H1 (cell line): ENCODE measurements at regions of chr7 and their contacts with region 1.

Region 1: DNA sequence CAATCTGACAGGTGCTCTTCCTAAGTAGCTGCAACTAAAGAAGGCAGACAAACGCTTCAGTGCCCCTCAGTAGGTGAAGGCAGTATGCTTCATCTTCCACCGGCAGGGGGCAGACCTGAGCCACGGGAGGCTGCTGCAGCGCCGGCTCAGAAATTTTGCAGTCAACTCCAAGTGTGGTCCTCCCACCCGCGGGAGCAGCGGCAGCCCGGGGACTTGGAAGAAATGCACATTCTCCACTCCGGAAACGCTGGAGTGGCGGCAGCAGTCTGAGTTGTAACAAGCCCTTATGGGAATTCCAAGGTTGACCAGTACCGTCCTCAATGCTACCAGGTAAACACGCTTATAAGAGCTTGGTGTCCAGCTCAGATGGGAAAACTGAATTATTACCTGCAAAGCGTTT is 3.4 kb downstream of the IGFBP3 start:
- DNase-seq: peak in 1 of 2 experiments; percentile 96
- H3K4me3 ChIP-seq: peak overlapping the region in 1 of 4 experiments; percentile 37; a peak in 2 of 8 replicates
- H3K27ac ChIP-seq: no peak overlapping the region
- H3K4me1 ChIP-seq: peaks cover 4 to 19% (median 5%) of the 10 kb centered on the region in 4 experiments; a peak in 6 of 7 replicates
- H3K27me3 ChIP-seq: peaks cover 14 to 45% (median 35%) of the 10 kb centered on the region in 4 experiments
- CTCF ChIP-seq: peak; percentile 87 to 93 (median 89)
- EP300 ChIP-seq: no peak
- POLR2A ChIP-seq: no peak
- RAD21 ChIP-seq: peak; percentile 83 to 86

Region 2: DNA sequence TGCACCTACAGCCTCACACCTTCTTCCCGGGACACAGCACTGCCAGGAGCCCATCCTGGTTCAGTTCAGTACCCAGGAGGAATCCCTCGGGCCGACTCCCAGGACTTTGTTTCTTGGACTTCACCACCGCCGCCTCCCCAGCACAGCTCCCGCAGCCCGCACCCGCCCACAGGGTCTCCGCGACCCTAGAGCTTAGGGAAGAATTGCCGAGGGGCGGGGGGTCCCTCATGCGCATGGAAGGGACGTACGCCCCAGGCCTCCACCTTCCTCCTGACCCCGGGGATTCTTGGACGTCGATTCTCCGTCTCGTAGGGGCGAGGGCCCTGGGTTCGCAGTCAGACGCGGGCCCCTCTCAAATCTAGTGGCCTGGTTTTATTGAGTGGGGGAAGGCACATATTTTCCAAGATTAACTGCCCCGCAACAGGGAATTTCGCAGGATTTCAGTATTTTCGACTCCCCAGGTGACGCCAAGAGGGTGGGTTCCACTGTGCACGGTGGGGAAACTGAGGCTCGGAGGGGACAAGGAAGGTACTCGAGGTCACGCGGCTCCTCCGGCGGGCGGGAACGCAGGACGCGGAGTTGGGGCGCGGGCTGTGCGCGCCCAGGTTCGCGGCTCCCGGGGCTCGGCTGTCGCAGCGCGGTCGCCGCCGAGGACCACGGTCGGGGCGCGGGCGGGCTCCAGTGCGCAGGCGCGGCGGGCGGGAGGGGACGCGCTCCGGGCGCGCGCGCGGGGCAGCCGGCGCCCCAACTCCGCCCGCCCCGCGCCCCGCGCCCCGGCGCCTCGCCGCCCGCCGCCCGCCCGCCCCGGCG is 343.8 kb before region 1 on chr7 and contains the start of gene ADCY1:
- CTCF ChIA-PET with region 1: no interaction called
- POLR2A ChIA-PET with region 1: no interaction called
- DNase-seq: peak in 1 of 2 experiments; percentile 75
- H3K4me3 ChIP-seq: peak within 1 kb of the TSS; percentile 68 to 86 (median 74)
- H3K27ac ChIP-seq: no peak within 1 kb of the TSS
- H3K4me1 ChIP-seq: peaks cover 5 to 26% (median 22%) of the 10 kb centered on the region in 4 experiments
- H3K27me3 ChIP-seq: peaks cover 7 to 40% (median 37%) of the 10 kb centered on the region in 4 experiments
- CTCF ChIP-seq: no peak
- EP300 ChIP-seq: no peak
- POLR2A ChIP-seq: no peak
- RAD21 ChIP-seq: no peak
- total RNA-seq, gene ADCY1: 25.9 and 26.9 TPM in 2 replicates

Region 3: GRCh38 chr7:45890902-45891461 is 26.7 kb before region 1 on chr7:
- CTCF ChIA-PET with region 1: interaction called, 22 read pairs
- POLR2A ChIA-PET with region 1: interaction called, 5 read pairs
- DNase-seq: no peak
- H3K4me3 ChIP-seq: no peak overlapping the region
- H3K27ac ChIP-seq: no peak overlapping the region
- H3K4me1 ChIP-seq: peaks cover 2 to 15% (median 9%) of the 10 kb centered on the region in 4 experiments
- H3K27me3 ChIP-seq: peaks cover 23 to 42% (median 35%) of the 10 kb centered on the region in 4 experiments
- CTCF ChIP-seq: peak in 2 of 3 experiments; percentile 29 to 41; a peak in 2 of 4 replicates
- EP300 ChIP-seq: no peak
- POLR2A ChIP-seq: no peak
- RAD21 ChIP-seq: peak; percentile 65 to 70

Region 4: GRCh38 chr7:45902820-45903219 is 14.8 kb before region 1 on chr7:
- CTCF ChIA-PET with region 1: interaction called, 19 read pairs
- POLR2A ChIA-PET with region 1: no interaction called
- DNase-seq: no peak
- H3K4me3 ChIP-seq: no peak overlapping the region
- H3K27ac ChIP-seq: no peak overlapping the region
- H3K4me1 ChIP-seq: no peaks in the 10 kb centered on the region
- H3K27me3 ChIP-seq: peaks cover 0 to 2% (median under 1%) of the 10 kb centered on the region in 4 experiments; a peak in 2 of 7 replicates
- CTCF ChIP-seq: peak in 1 of 3 experiments; percentile 28; a peak in 2 of 4 replicates
- EP300 ChIP-seq: no peak
- POLR2A ChIP-seq: no peak
- RAD21 ChIP-seq: peak in 1 of 2 experiments; percentile 23; a peak in 1 of 4 replicates

Region 5: GRCh38 chr7:46352004-46352954 is 434.6 kb after region 1 on chr7:
- CTCF ChIA-PET with region 1: interaction called, 242 read pairs
- POLR2A ChIA-PET with region 1: no interaction called
- DNase-seq: peak in 1 of 2 experiments; percentile 15
- H3K4me3 ChIP-seq: no peak overlapping the region
- H3K27ac ChIP-seq: no peak overlapping the region
- H3K4me1 ChIP-seq: no peaks in the 10 kb centered on the region; a peak in 1 of 7 replicates
- H3K27me3 ChIP-seq: no peaks in the 10 kb centered on the region
- CTCF ChIP-seq: peak; percentile 51 to 89 (median 86)
- EP300 ChIP-seq: no peak
- POLR2A ChIP-seq: no peak
- RAD21 ChIP-seq: peak; percentile 99 to 100

Region 6: GRCh38 chr7:46478046-46478445 is 560.4 kb after region 1 on chr7:
- CTCF ChIA-PET with region 1: no interaction called
- POLR2A ChIA-PET with region 1: no interaction called
- DNase-seq: no peak
- H3K4me3 ChIP-seq: no peak overlapping the region; a peak in 1 of 8 replicates
- H3K27ac ChIP-seq: no peak overlapping the region
- H3K4me1 ChIP-seq: no peaks in the 10 kb centered on the region
- H3K27me3 ChIP-seq: no peaks in the 10 kb centered on the region
- CTCF ChIP-seq: no peak
- EP300 ChIP-seq: no peak
- POLR2A ChIP-seq: no peak
- RAD21 ChIP-seq: no peak

Region 7: DNA sequence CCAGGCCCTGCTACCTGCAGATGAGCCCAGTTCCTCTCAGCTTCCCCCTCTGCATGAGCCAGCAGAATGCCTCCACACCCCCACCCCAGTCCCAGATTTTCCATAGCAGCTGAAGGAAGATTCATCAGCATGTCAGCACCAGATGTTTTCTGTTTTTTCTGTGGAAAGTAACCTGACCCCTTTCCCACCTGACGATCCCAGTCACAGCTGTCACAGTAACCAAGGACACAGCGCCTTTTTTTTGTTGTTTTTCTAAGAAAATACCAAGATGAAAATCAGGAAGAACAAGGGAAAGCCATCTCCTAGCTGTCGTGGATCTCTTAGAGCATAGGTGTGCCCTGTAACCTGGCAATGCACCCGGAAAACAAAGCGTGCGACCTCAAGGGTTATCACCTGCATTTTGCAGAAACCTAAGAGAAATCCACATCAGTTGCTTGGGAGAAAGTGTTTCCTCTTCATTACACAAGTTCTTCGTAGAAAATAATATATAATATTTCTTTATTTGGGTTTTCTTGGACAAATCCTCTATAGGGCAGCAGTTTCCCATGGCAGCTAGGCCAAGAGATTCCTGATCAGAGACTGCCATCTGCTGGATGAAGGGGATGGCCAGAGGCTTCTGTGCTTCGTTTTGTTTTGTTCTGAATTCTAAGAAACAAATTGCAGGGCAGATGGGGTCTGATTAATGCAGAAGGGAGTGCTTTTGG is 1262.3 kb after region 1 on chr7:
- CTCF ChIA-PET with region 1: interaction called, 56 read pairs
- POLR2A ChIA-PET with region 1: no interaction called
- DNase-seq: peak in 1 of 2 experiments; percentile 68
- H3K4me3 ChIP-seq: no peak overlapping the region
- H3K27ac ChIP-seq: no peak overlapping the region
- H3K4me1 ChIP-seq: peaks cover 0 to 6% (median 0%) of the 10 kb centered on the region in 4 experiments; a peak in 1 of 7 replicates
- H3K27me3 ChIP-seq: no peaks in the 10 kb centered on the region
- CTCF ChIP-seq: peak; percentile 48 to 82 (median 74)
- EP300 ChIP-seq: no peak
- POLR2A ChIP-seq: no peak
- RAD21 ChIP-seq: peak; percentile 94